ENCODE measurements at regions of chr13 and their contacts with region 1.

Region 1: DNA sequence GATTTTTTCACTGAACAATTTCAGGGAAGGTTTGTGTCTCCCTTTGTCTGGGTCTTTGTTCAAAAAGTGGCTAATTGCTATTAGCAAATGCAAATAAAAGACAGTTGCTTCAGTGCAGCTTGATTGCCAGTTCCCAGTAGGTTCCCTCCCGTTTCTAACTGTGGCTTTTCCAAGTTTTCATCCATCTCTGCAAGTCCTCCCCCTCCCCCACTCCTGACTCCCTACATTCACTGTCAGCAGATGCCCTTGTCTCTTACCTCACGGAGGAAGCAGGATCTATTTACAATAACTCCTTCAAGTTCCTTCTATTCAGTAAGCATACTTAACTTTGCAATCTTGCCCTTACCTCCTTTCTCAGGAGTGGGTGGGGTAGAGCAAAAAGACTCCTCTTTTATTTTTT is 55.4 kb upstream of the SCEL start:
- DNase-seq: no peak
- ATAC-seq: no peak
- H3K4me3 ChIP-seq: no peak overlapping the region
- H3K4me3 Mint-ChIP-seq: no peak overlapping the region
- H3K27ac ChIP-seq: no peak overlapping the region
- H3K27ac Mint-ChIP-seq: no peak overlapping the region
- H3K4me1 ChIP-seq: peaks cover 5 to 6% of the 10 kb centered on the region in 2 donors
- H3K4me1 Mint-ChIP-seq: peaks cover 13% of the 10 kb centered on the region
- H3K27me3 ChIP-seq: no peaks in the 10 kb centered on the region
- H3K27me3 Mint-ChIP-seq: no peaks in the 10 kb centered on the region
- CTCF ChIP-seq: no peak

Region 2: DNA sequence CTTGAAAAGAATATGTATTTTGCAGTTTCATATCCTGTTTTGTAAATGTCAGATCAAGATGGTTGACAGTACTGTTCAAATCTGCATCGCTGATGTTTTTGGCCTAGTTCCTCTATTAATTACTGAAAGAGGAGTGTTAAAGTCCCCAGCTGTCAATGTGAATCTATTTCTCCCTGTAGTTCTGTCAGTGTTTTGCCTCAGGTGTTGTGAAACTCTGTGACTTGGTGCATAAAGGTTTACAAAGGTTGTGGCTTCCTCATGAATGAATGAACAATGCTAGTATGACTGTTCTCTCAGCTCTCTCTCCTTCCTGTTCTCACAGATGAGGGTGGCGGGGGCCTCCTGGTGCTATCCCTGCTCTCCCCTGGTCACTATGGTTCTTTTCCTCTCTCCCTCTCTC is 295.6 kb before region 1 on chr13:
- CTCF ChIA-PET with region 1: interaction called, 5 read pairs
- POLR2A ChIA-PET with region 1: no interaction called
- intact Hi-C with region 1: loop called (anchors 1 kb)
- DNase-seq: peak; percentile 79
- ATAC-seq: peak; percentile 94
- H3K4me3 ChIP-seq: no peak overlapping the region
- H3K4me3 Mint-ChIP-seq: peak overlapping the region; percentile 48
- H3K27ac ChIP-seq: peak overlapping the region; percentile 47 to 78
- H3K27ac Mint-ChIP-seq: peak overlapping the region; percentile 90
- H3K4me1 ChIP-seq: peaks cover 12 to 15% of the 10 kb centered on the region in 2 donors
- H3K4me1 Mint-ChIP-seq: peaks cover 23% of the 10 kb centered on the region
- H3K27me3 ChIP-seq: no peaks in the 10 kb centered on the region
- H3K27me3 Mint-ChIP-seq: no peaks in the 10 kb centered on the region
- CTCF ChIP-seq: no peak

Region 3: DNA sequence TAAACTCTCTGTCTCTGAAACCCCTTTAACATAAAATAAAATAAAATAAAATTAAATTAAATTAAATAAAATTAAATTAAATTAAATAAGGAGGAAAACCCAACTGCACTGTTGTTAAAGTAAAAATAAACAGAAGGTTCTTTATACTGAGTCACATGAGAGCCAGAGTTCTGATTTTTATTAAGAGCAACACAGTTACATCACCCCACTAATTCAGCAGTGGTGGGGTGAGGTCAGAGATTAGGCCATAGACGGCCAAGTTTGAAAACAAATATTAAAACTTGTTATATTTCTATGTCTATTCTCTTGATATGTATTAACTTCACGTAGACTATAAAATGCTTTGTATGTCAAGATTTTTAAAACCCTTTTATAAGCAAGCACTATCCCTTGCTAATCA is 212.7 kb before region 1 on chr13:
- CTCF ChIA-PET with region 1: interaction called, 115 read pairs
- POLR2A ChIA-PET with region 1: no interaction called
- intact Hi-C with region 1: no loop called
- DNase-seq: no peak
- ATAC-seq: no peak
- H3K4me3 ChIP-seq: no peak overlapping the region
- H3K4me3 Mint-ChIP-seq: no peak overlapping the region
- H3K27ac ChIP-seq: no peak overlapping the region
- H3K27ac Mint-ChIP-seq: no peak overlapping the region
- H3K4me1 ChIP-seq: no peaks in the 10 kb centered on the region
- H3K4me1 Mint-ChIP-seq: no peaks in the 10 kb centered on the region
- H3K27me3 ChIP-seq: no peaks in the 10 kb centered on the region
- H3K27me3 Mint-ChIP-seq: no peaks in the 10 kb centered on the region
- CTCF ChIP-seq: no peak

Region 4: DNA sequence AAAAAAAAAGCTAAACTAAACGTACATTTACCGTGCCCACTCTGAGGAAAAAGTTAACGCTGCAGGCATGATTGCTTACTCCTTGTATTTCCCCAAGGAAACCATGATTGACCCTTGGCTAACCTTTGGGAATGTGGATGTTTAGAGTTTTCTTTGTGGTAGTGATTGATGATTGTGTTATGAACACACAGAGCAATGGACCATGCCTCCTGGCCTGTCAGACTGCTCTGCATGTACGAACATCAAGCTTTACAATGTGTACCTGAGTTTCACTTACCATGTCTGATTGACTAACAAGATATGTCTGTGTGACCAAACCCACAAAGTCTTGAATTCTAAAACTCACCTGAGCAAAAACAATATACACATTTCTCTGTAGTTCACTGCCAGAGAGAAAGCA is 188.3 kb before region 1 on chr13:
- CTCF ChIA-PET with region 1: interaction called, 38 read pairs
- POLR2A ChIA-PET with region 1: no interaction called
- intact Hi-C with region 1: loop called (anchors 1 kb)
- DNase-seq: no peak
- ATAC-seq: no peak
- H3K4me3 ChIP-seq: no peak overlapping the region
- H3K4me3 Mint-ChIP-seq: no peak overlapping the region
- H3K27ac ChIP-seq: peak overlapping the region in 1 of 2 donors; percentile 37
- H3K27ac Mint-ChIP-seq: peak overlapping the region; percentile 15
- H3K4me1 ChIP-seq: peaks cover 6 to 7% of the 10 kb centered on the region in 2 donors
- H3K4me1 Mint-ChIP-seq: peaks cover 43% of the 10 kb centered on the region
- H3K27me3 ChIP-seq: no peaks in the 10 kb centered on the region
- H3K27me3 Mint-ChIP-seq: no peaks in the 10 kb centered on the region
- CTCF ChIP-seq: no peak

Region 5: GRCh38 chr13:77329133-77329910 is 150.7 kb before region 1 on chr13:
- CTCF ChIA-PET with region 1: interaction called, 137 read pairs
- POLR2A ChIA-PET with region 1: interaction called, 27 read pairs
- intact Hi-C with region 1: loop called (anchors 1 kb)
- DNase-seq: peak; percentile 96
- ATAC-seq: peak; percentile 60
- H3K4me3 ChIP-seq: peak overlapping the region; percentile 80 to 99 (median 92)
- H3K4me3 Mint-ChIP-seq: peak overlapping the region; percentile 94
- H3K27ac ChIP-seq: peak overlapping the region; percentile 84 to 91
- H3K27ac Mint-ChIP-seq: peak overlapping the region; percentile 97
- H3K4me1 ChIP-seq: peaks cover 31 to 39% of the 10 kb centered on the region in 2 donors
- H3K4me1 Mint-ChIP-seq: peaks cover 57% of the 10 kb centered on the region
- H3K27me3 ChIP-seq: no peaks in the 10 kb centered on the region
- H3K27me3 Mint-ChIP-seq: no peaks in the 10 kb centered on the region
- CTCF ChIP-seq: no peak

Region 6: GRCh38 chr13:77429320-77430142 is 50.5 kb before region 1 on chr13:
- CTCF ChIA-PET with region 1: interaction called, 4 read pairs
- POLR2A ChIA-PET with region 1: no interaction called
- intact Hi-C with region 1: loop called (anchors 1 kb)
- DNase-seq: peak; percentile 79
- ATAC-seq: peak; percentile 89
- H3K4me3 ChIP-seq: peak overlapping the region in 1 of 5 experiments; percentile 22
- H3K4me3 Mint-ChIP-seq: peak overlapping the region; percentile 74
- H3K27ac ChIP-seq: peak overlapping the region; percentile 60 to 78
- H3K27ac Mint-ChIP-seq: peak overlapping the region; percentile 95
- H3K4me1 ChIP-seq: peaks cover 15 to 21% of the 10 kb centered on the region in 2 donors
- H3K4me1 Mint-ChIP-seq: peaks cover 32% of the 10 kb centered on the region
- H3K27me3 ChIP-seq: no peaks in the 10 kb centered on the region
- H3K27me3 Mint-ChIP-seq: no peaks in the 10 kb centered on the region
- CTCF ChIP-seq: no peak

Measured in B cell (primary cell).